GM12878 (cell line): ENCODE measurements at regions of chr15 and their contacts with region 1.

Region 1: GRCh38 chr15:45714590-45715488 is 80.0 kb downstream of the SQOR start:
- DNase-seq: no peak
- ATAC-seq: peak; percentile 83
- H3K4me3 ChIP-seq: no peak overlapping the region
- H3K27ac ChIP-seq: no peak overlapping the region
- H3K4me1 ChIP-seq: no peaks in the 10 kb centered on the region
- H3K27me3 ChIP-seq: no peaks in the 10 kb centered on the region
- CTCF ChIP-seq: peak; percentile 40 to 87 (median 67); a peak in 5 of 6 replicates
- EP300 ChIP-seq: no peak
- POLR2A ChIP-seq: no peak
- RAD21 ChIP-seq: peak; percentile 52

Region 2: GRCh38 chr15:45729141-45729540 is 14.3 kb after region 1 on chr15:
- CTCF ChIA-PET with region 1: interaction called, 11 read pairs
- POLR2A ChIA-PET with region 1: no interaction called
- RAD21 ChIA-PET with region 1: no interaction called
- SMC1A ChIA-PET with region 1: interaction called, 3 read pairs
- in situ Hi-C with region 1: no loop called
- intact Hi-C with region 1: no loop called
- DNase-seq: no peak
- ATAC-seq: no peak
- H3K4me3 ChIP-seq: no peak overlapping the region
- H3K27ac ChIP-seq: no peak overlapping the region
- H3K4me1 ChIP-seq: no peaks in the 10 kb centered on the region
- H3K27me3 ChIP-seq: peaks cover 0 to 2% of the 10 kb centered on the region in 2 experiments; a peak in 1 of 4 replicates
- CTCF ChIP-seq: no peak
- EP300 ChIP-seq: no peak
- POLR2A ChIP-seq: no peak
- RAD21 ChIP-seq: no peak

Region 3: GRCh38 chr15:45790325-45790943 is 75.6 kb after region 1 on chr15:
- CTCF ChIA-PET with region 1: interaction called, 17 read pairs
- POLR2A ChIA-PET with region 1: no interaction called
- RAD21 ChIA-PET with region 1: interaction called, 6 read pairs
- SMC1A ChIA-PET with region 1: no interaction called
- in situ Hi-C with region 1: no loop called
- intact Hi-C with region 1: no loop called
- DNase-seq: no peak
- ATAC-seq: peak; percentile 80
- H3K4me3 ChIP-seq: no peak overlapping the region
- H3K27ac ChIP-seq: no peak overlapping the region
- H3K4me1 ChIP-seq: no peaks in the 10 kb centered on the region
- H3K27me3 ChIP-seq: no peaks in the 10 kb centered on the region
- CTCF ChIP-seq: peak; percentile 33 to 46 (median 37); a peak in 4 of 6 replicates
- EP300 ChIP-seq: no peak
- POLR2A ChIP-seq: no peak
- RAD21 ChIP-seq: peak; percentile 33; the same call in 1 of the 2 replicates

Region 4: DNA sequence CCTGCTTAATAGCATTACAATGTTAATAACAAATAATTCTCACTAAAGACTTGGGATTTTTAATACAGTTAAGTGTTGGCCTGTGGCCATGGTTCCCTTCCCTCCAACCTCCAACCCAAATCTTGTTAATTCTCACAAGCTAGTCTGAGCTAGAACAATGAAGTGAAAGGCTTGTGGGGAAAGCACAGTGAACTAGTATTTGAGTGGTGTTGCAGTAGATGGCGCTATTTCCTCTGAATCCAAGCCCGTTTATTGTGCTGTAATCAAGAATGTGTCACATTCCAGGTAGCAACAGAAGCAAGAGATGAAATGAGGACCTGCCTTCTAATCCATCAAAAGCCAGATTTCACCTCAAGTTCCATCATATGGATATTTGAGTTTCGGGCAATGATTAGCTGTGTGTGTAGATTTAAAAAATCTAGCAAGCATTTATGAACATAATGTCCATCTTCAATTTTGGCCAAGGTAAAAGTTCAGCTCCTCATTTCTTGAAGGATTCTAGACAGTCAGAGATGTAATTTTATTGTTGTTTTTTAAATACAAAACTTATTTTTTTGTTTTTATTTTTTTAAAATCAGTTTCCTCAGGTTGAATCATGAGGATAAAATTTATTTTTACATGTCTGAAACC is 80.7 kb after region 1 on chr15:
- CTCF ChIA-PET with region 1: interaction called, 17 read pairs
- POLR2A ChIA-PET with region 1: no interaction called
- RAD21 ChIA-PET with region 1: interaction called, 6 read pairs
- SMC1A ChIA-PET with region 1: interaction called, 3 read pairs
- in situ Hi-C with region 1: no loop called
- intact Hi-C with region 1: no loop called
- DNase-seq: no peak
- ATAC-seq: peak; percentile 66
- H3K4me3 ChIP-seq: no peak overlapping the region
- H3K27ac ChIP-seq: no peak overlapping the region
- H3K4me1 ChIP-seq: no peaks in the 10 kb centered on the region
- H3K27me3 ChIP-seq: no peaks in the 10 kb centered on the region
- CTCF ChIP-seq: peak; percentile 45 to 50 (median 46); a peak in 4 of 6 replicates
- EP300 ChIP-seq: no peak
- POLR2A ChIP-seq: no peak
- RAD21 ChIP-seq: peak; percentile 49